Common myeloid progenitor, CD34-positive (primary cell): ENCODE measurements at regions of chr10 and their contacts with region 1.

Region 1: DNA sequence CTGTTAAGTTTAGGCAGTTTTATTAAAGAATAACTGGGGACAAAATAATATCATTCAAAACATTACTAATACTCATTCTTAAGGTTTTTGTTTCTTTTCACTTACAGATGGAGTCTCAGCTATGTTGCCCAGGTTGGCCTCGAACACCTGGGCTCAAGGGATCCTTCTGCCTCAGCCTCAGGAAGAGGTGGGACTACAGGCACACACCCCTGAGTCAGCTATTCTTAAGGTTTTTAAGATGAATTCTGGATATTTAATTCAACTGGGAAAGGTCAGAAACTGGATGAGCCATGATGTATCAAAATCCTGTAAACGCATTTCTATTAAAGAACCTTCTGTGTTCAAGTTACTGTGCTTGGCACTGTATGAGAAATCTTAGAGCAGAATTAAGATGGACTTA is 3.5 kb downstream of the OAT start:
- DNase-seq: no peak
- H3K4me3 ChIP-seq: no peak overlapping the region
- H3K27ac ChIP-seq: no peak overlapping the region
- H3K4me1 ChIP-seq: peaks cover 0 to 16% (median 13%) of the 10 kb centered on the region in 4 experiments
- H3K27me3 ChIP-seq: peaks cover 0 to 8% (median 4%) of the 10 kb centered on the region in 5 experiments

Region 2: GRCh38 chr10:124032971-124033886 is 382.0 kb before region 1 on chr10:
- CTCF ChIA-PET with region 1: no interaction called
- POLR2A ChIA-PET with region 1: interaction called, 11 read pairs
- DNase-seq: peak in 2 of 3 donors; percentile 45 to 63
- H3K4me3 ChIP-seq: no peak overlapping the region
- H3K27ac ChIP-seq: no peak overlapping the region
- H3K4me1 ChIP-seq: peaks cover 8 to 16% (median 14%) of the 10 kb centered on the region in 4 experiments
- H3K27me3 ChIP-seq: peaks cover 0 to 10% (median 0%) of the 10 kb centered on the region in 5 experiments